Spleen (tissue), 13 donors: ENCODE measurements at regions of chr3 and their contacts with region 1.

Region 1: GRCh38 chr3:42780892-42781700 is 8.0 kb upstream of the CCDC13 start:
- DNase-seq: no peak
- H3K4me3 ChIP-seq: no peak overlapping the region
- H3K27ac ChIP-seq: no peak overlapping the region
- H3K4me1 ChIP-seq: peaks cover 0 to 15% (median 4%) of the 10 kb centered on the region in 6 donors
- H3K27me3 ChIP-seq: no peaks in the 10 kb centered on the region
- CTCF ChIP-seq: peak; percentile 67 to 87 (median 81)
- POLR2A ChIP-seq: no peak

Region 2: DNA sequence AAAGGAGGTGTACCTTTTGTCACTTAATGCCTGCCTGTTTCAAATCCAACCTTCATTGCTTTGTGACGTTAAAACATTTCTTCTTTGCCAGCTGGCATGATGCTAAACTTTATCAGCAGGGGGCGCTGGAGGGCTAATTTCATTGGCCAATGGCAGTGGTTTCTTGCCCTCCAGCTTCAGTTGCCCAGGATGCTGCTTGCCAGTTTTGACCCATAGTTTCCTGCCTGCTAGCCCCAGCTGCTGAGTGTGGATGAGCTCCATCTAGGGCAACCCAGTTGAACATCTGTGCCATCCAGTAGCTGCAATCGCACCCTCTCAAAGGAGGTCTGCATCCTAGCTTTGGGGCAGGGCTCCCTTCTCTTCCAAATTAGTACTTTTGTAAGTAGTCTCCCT is 50.2 kb after region 1 on chr3:
- intact Hi-C with region 1: loop called (anchors 5 kb)
- DNase-seq: peak; percentile 89
- H3K4me3 ChIP-seq: no peak overlapping the region
- H3K27ac ChIP-seq: no peak overlapping the region
- H3K4me1 ChIP-seq: peaks cover 0 to 12% (median 4%) of the 10 kb centered on the region in 6 donors
- H3K27me3 ChIP-seq: no peaks in the 10 kb centered on the region
- CTCF ChIP-seq: peak; percentile 63 to 91 (median 87)
- POLR2A ChIP-seq: no peak

Region 3: DNA sequence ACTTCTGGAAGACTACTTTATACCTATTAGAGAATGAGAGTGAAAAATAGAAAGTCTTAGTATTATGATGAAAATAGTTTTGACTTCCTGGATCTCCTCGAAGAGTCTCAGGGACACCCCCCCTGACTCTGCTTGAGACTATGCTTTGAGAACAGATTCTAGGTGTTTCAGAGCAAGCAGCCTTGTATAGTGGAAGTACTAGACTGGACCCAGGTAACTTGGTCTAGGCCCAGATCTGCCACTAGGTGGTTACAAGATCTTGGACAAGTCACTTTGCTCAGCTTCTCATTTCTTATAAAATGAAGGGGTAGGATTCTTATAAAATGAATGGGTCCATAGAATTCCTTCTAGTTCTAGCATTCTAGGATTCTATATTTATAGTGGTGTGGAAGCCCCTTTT is 918.8 kb after region 1 on chr3:
- intact Hi-C with region 1: no loop called
- DNase-seq: no peak
- H3K4me3 ChIP-seq: no peak overlapping the region
- H3K27ac ChIP-seq: no peak overlapping the region
- H3K4me1 ChIP-seq: peaks cover 0 to 33% (median 0%) of the 10 kb centered on the region in 6 donors
- H3K27me3 ChIP-seq: no peaks in the 10 kb centered on the region
- CTCF ChIP-seq: peak in 1 of 11 experiments; percentile 16
- POLR2A ChIP-seq: no peak